HCT116 (cell line): ENCODE measurements at regions of chr6 and their contacts with region 1.

Region 1: DNA sequence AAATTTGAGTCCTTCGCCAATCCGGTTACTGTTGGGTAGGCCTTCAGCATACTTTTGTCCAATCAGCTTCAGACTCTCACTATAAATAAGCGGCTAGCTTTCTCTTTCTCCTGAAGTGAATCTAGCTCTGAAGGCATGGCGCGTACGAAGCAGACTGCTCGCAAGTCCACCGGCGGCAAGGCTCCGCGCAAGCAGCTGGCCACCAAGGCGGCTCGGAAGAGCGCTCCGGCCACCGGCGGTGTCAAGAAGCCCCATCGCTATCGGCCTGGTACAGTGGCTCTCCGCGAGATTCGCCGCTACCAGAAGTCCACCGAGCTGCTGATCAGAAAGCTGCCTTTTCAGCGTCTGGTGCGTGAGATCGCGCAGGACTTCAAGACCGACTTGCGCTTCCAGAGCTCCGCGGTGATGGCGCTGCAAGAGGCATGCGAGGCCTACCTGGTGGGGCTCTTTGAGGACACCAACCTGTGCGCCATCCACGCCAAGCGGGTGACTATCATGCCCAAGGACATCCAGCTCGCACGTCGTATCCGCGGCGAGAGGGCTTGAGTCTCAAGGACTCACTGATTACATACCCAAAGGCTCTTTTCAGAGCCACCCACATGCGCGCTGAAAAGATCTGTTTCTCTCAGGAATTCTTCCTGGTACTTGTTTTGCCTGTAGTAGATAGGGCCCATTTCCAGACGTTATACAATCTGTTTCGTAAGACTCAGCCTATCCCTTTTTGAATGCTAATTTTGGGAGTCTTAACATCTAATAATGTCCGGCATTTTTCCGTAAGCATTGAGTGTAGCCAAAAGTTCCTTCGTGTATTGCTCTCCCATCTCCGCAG is 102.0 kb downstream of the OR2B2 start:
- DNase-seq: peak; percentile 97
- ATAC-seq: peak; percentile 43
- H3K4me3 ChIP-seq: peak overlapping the region; percentile 59 to 69
- H3K27ac ChIP-seq: peak overlapping the region; percentile 88
- H3K4me1 ChIP-seq: peaks cover 36 to 64% of the 10 kb centered on the region in 2 experiments
- H3K27me3 ChIP-seq: no peaks in the 10 kb centered on the region
- CTCF ChIP-seq: no peak
- POLR2A ChIP-seq: peak; percentile 92
- RAD21 ChIP-seq: no peak

Region 2: GRCh38 chr6:27132532-27133280 is 677.4 kb before region 1 on chr6:
- CTCF ChIA-PET with region 1: no interaction called
- POLR2A ChIA-PET with region 1: interaction called, 73 read pairs
- RAD21 ChIA-PET with region 1: no interaction called
- intact Hi-C with region 1: no loop called
- DNase-seq: peak; percentile 100
- ATAC-seq: peak; percentile 75
- H3K4me3 ChIP-seq: peak overlapping the region; percentile 62 to 71
- H3K27ac ChIP-seq: peak overlapping the region; percentile 99
- H3K4me1 ChIP-seq: peaks cover 21 to 38% of the 10 kb centered on the region in 2 experiments
- H3K27me3 ChIP-seq: no peaks in the 10 kb centered on the region
- CTCF ChIP-seq: no peak
- POLR2A ChIP-seq: peak; percentile 98
- RAD21 ChIP-seq: no peak

Region 3: GRCh38 chr6:27795697-27796494 is 14.3 kb before region 1 on chr6:
- CTCF ChIA-PET with region 1: interaction called, 7 read pairs
- POLR2A ChIA-PET with region 1: interaction called, 69 read pairs
- RAD21 ChIA-PET with region 1: no interaction called
- intact Hi-C with region 1: no loop called
- DNase-seq: peak; percentile 90
- ATAC-seq: peak; percentile 46
- H3K4me3 ChIP-seq: no peak overlapping the region
- H3K27ac ChIP-seq: peak overlapping the region; percentile 26; the same call in 1 of the 2 replicates
- H3K4me1 ChIP-seq: peaks cover 13 to 32% of the 10 kb centered on the region in 2 experiments
- H3K27me3 ChIP-seq: no peaks in the 10 kb centered on the region
- CTCF ChIP-seq: peak; percentile 75 to 80 (median 76); a peak in 5 of 6 replicates
- POLR2A ChIP-seq: no peak
- RAD21 ChIP-seq: peak; percentile 82

Region 4: DNA sequence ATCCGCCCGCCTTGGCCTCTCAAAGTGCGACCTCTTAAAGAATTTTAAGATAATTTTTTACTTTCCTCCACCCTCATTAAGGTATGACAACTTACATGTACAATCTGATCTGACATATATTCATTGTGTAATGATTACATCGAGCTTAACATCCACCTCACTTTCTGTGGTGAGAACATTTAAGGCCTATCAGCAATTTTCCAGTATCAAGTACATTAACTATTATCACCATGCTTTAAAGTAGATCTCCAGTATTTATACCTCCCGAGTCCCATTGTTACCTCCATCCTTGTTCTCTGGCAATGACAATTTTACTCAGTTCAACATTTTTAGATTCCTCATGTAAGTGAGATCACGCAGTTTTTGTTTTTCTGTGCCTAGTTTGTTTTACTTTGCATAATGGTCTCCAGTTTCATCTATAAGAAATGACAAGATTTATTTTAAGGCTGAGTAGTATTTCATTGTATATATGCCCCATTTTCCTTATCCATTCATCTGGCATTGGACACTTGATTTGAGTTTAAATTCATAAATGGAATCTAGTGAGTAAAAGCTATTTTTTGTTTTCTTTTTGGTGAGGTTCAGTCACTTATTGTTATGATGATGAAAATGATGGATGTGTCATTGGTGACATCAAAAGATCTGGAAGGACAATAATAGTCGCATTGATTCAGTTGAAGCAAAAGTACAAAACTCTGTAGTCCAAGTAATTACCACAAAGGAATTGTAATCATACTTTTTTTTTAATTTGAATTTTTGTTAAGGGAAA is 15.1 kb after region 1 on chr6:
- CTCF ChIA-PET with region 1: no interaction called
- POLR2A ChIA-PET with region 1: interaction called, 221 read pairs
- RAD21 ChIA-PET with region 1: no interaction called
- intact Hi-C with region 1: no loop called
- DNase-seq: no peak
- ATAC-seq: no peak
- H3K4me3 ChIP-seq: peak overlapping the region; percentile 50 to 71
- H3K27ac ChIP-seq: peak overlapping the region; percentile 76
- H3K4me1 ChIP-seq: peaks cover 5 to 39% of the 10 kb centered on the region in 2 experiments; a peak in 3 of 4 replicates
- H3K27me3 ChIP-seq: no peaks in the 10 kb centered on the region
- CTCF ChIP-seq: no peak
- POLR2A ChIP-seq: no peak
- RAD21 ChIP-seq: no peak

Region 5: GRCh38 chr6:28053584-28053983 is 243.4 kb after region 1 on chr6:
- CTCF ChIA-PET with region 1: no interaction called
- POLR2A ChIA-PET with region 1: no interaction called
- RAD21 ChIA-PET with region 1: no interaction called
- intact Hi-C with region 1: no loop called
- DNase-seq: no peak
- ATAC-seq: no peak
- H3K4me3 ChIP-seq: no peak overlapping the region
- H3K27ac ChIP-seq: no peak overlapping the region
- H3K4me1 ChIP-seq: no peaks in the 10 kb centered on the region
- H3K27me3 ChIP-seq: no peaks in the 10 kb centered on the region
- CTCF ChIP-seq: no peak
- POLR2A ChIP-seq: no peak
- RAD21 ChIP-seq: no peak